ENCODE measurements at regions of chr19 and their contacts with region 1.

Region 1: GRCh38 chr19:48738557-48739399 is 1.6 kb downstream of the RASIP1 start:
- DNase-seq: peak; percentile 88 to 97 (median 93)
- ATAC-seq: peak; percentile 92
- H3K4me3 ChIP-seq: no peak overlapping the region
- H3K4me3 Mint-ChIP-seq: peak overlapping the region; percentile 65
- H3K27ac ChIP-seq: no peak overlapping the region
- H3K27ac Mint-ChIP-seq: no peak overlapping the region
- H3K4me1 ChIP-seq: peaks cover 32% of the 10 kb centered on the region
- H3K4me1 Mint-ChIP-seq: peaks cover 20% of the 10 kb centered on the region
- H3K27me3 ChIP-seq: peaks cover 0 to 12% of the 10 kb centered on the region in 2 experiments
- H3K27me3 Mint-ChIP-seq: no peaks in the 10 kb centered on the region
- CTCF ChIP-seq: no peak

Region 2: GRCh38 chr19:48685583-48685982 is 53.2 kb before region 1 on chr19:
- CTCF ChIA-PET with region 1: no interaction called
- POLR2A ChIA-PET with region 1: no interaction called
- intact Hi-C with region 1: no loop called
- DNase-seq: no peak
- ATAC-seq: no peak
- H3K4me3 ChIP-seq: no peak overlapping the region
- H3K4me3 Mint-ChIP-seq: no peak overlapping the region
- H3K27ac ChIP-seq: no peak overlapping the region
- H3K27ac Mint-ChIP-seq: no peak overlapping the region
- H3K4me1 ChIP-seq: no peaks in the 10 kb centered on the region
- H3K4me1 Mint-ChIP-seq: no peaks in the 10 kb centered on the region
- H3K27me3 ChIP-seq: no peaks in the 10 kb centered on the region
- H3K27me3 Mint-ChIP-seq: no peaks in the 10 kb centered on the region
- CTCF ChIP-seq: no peak

Region 3: DNA sequence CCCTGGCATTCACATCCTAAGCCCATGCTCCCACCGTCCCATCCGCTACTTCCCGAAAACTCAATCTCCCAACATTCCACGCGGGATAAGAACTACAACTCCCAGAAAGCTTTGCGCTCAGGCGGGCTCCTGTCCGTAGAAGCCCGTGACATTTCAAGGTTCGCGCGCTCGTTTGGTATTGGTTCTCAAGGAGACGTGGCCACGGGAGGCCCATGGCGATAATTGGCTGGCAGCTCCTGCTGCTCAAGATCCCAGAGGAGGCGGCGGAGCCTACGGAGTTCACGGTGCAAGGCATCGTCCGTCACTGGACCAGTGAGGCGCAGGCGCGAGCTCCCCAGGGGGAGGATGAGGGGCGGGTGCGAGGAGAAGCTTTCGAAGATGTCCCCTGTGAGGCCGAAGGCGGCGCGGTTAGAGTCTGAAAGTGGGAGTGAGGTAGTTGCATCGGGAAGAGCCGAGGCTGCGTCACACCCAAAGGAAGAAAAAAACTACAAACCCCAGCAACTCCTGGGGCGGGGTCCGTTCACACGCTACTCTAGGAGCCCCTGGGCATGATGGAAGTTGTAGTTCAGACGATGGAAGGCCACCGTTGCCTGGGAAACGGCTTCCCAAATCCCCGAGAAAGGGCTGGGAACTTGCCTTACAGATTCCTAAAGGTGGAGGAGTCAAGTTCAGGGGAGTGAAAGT is 18.0 kb before region 1 on chr19:
- CTCF ChIA-PET with region 1: interaction called, 18 read pairs
- POLR2A ChIA-PET with region 1: interaction called, 25 read pairs
- intact Hi-C with region 1: loop called in 1 of 2 experiments (anchors 2 kb)
- DNase-seq: peak; percentile 81 to 96 (median 86)
- ATAC-seq: peak; percentile 79
- H3K4me3 ChIP-seq: peak overlapping the region; percentile 84
- H3K4me3 Mint-ChIP-seq: peak overlapping the region; percentile 92
- H3K27ac ChIP-seq: peak overlapping the region; percentile 81 to 94
- H3K27ac Mint-ChIP-seq: peak overlapping the region; percentile 96
- H3K4me1 ChIP-seq: peaks cover 32% of the 10 kb centered on the region
- H3K4me1 Mint-ChIP-seq: peaks cover 23% of the 10 kb centered on the region
- H3K27me3 ChIP-seq: no peaks in the 10 kb centered on the region
- H3K27me3 Mint-ChIP-seq: no peaks in the 10 kb centered on the region
- CTCF ChIP-seq: no peak